ENCODE measurements at regions of chr15 and their contacts with region 1.

Region 1: DNA sequence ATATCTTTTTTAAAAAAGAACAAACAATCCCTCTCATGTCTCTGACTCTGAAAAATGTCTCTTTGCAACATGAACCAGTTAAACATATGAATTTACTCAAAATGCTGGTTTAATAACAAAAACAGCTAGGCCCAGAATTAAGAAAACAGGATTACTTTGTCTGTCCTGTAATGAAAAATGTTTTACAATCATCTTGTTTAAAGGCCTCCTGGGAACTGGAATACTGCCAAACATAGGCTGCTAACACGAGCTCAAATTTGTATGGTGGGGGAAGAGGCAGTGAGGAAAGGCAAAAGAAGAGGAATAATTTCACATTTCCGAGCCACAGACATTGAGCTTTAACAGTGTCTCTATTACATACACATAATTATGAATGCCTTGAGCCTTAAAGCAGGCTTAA is 61.7 kb upstream of the PPIB start:
- DNase-seq: no peak
- H3K4me3 Mint-ChIP-seq: no peak overlapping the region
- H3K27ac Mint-ChIP-seq: no peak overlapping the region
- H3K4me1 Mint-ChIP-seq: peaks cover 20% of the 10 kb centered on the region
- H3K27me3 Mint-ChIP-seq: peaks cover 2% of the 10 kb centered on the region

Region 2: DNA sequence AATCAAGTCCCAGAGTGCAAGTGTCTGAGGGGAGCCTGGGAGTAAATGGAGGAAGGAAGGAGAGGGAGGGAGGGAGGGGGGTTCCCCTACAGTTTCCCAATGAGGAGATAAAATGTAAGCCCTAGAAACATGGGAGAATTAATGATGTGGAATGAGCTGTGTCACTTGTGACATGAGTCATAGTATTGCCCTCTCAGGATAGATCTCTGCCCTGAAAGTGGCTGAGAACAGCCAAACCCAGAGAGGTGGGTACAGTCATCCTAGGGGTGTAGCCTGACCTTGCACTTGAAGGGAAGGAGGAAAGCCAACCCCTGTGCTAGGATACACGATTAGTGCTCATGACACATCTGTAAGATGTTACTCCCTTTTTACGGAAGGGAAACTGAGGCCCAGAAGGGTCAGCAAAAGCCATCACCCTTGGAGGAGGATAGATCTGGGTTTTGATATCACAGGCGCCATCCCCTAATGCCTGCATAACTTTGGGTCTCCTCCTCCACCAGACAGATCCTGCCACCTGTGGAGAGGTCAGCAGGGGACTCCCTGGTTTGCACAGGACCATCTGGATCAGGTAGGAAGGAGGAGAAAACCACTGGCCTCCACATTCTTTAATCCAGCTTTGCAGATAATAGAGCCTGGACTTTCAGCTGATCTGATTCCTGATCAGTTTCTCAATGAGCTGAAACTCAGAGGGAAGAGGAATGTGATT is 743.3 kb before region 1 on chr15:
- intact Hi-C with region 1: no loop called
- DNase-seq: no peak
- H3K4me3 Mint-ChIP-seq: peak overlapping the region; percentile 19
- H3K27ac Mint-ChIP-seq: peak overlapping the region; percentile 97
- H3K4me1 Mint-ChIP-seq: peaks cover 72% of the 10 kb centered on the region
- H3K27me3 Mint-ChIP-seq: no peaks in the 10 kb centered on the region

Region 3: DNA sequence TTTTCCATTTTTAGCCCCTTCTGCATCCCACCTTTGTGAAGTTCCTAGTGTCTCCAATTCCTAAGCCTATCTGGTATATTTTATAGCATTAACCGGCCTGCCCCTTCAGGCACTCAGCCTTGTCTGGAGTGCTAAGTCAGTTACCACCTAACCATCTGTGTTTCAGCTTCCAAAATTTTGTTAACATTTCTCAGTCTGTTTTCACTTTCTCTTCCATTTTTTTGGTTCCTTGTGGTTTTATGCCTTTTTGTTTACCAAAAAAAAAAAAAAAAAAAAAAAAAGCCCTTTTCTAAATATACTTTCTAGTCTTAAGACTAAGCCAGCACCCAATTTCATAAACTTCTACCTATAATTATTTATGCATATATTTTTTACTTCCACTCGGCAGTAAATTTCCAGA is 39.1 kb after region 1 on chr15:
- intact Hi-C with region 1: loop called (anchors 5 kb)
- DNase-seq: no peak
- H3K4me3 Mint-ChIP-seq: no peak overlapping the region
- H3K27ac Mint-ChIP-seq: no peak overlapping the region
- H3K4me1 Mint-ChIP-seq: peaks cover 40% of the 10 kb centered on the region
- H3K27me3 Mint-ChIP-seq: no peaks in the 10 kb centered on the region